K562 (cell line): ENCODE measurements at regions of chr3 and their contacts with region 1.

Region 1: GRCh38 chr3:45075821-45076625 is 49.9 kb downstream of the CLEC3B start:
- DNase-seq: no peak
- ATAC-seq: peak; percentile 39
- H3K4me3 ChIP-seq: no peak overlapping the region
- H3K27ac ChIP-seq: peak overlapping the region; percentile 33; the same call in 2 of the 3 replicates
- H3K4me1 ChIP-seq: peaks cover 17 to 51% of the 10 kb centered on the region in 2 experiments; a peak in 4 of 5 replicates
- H3K27me3 ChIP-seq: no peaks in the 10 kb centered on the region
- CTCF ChIP-seq: no peak
- EP300 ChIP-seq: no peak
- POLR2A ChIP-seq: no peak
- RAD21 ChIP-seq: no peak

Region 2: DNA sequence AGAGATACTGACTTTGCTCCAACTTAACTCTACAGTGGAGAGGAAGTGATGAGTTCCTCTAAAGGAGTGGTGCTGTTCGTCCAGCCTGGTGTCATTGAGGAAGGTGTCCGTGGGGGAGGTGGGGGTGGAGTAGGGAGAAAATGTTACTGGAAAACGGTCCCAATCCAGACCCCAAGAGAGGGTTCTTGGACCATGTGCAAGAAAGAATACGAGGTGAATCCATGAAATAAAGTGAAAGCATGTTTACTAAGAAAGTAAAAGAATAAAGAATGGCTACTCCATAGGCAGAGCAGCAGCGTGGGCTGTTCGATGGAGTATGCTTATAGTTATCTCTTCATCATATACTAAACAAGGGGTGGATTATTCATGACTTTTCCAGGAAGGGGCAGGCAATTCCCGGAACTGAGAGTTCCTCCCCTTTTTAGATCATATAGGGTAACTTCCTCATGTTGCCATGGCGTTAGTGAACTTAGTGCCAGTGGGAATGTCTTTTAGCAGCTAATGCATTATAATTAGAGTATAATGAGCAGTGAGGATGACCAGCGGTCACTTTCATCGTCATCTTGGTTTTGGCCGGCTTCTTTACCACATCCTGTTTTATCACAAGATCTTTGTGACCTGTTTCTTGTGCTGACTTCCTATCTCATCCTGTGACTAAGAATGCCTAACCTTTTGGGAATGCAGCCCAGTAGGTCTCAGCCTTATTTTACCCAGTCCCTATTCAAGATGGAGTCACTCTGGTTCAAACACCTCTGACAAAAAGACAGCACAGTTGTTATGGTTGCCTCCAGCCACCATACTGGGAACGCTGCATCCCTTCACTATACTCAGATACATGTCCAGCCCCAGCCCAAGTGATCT is 11.3 kb before region 1 on chr3:
- CTCF ChIA-PET with region 1: no interaction called
- POLR2A ChIA-PET with region 1: interaction called, 13 read pairs
- in situ Hi-C with region 1: no loop called
- intact Hi-C with region 1: no loop called
- DNase-seq: peak; percentile 58 to 99 (median 70)
- ATAC-seq: peak; percentile 73
- H3K4me3 ChIP-seq: peak overlapping the region; percentile 12; the same call in 1 of the 2 replicates
- H3K27ac ChIP-seq: peak overlapping the region; percentile 94
- H3K4me1 ChIP-seq: peaks cover 25 to 68% of the 10 kb centered on the region in 2 experiments
- H3K27me3 ChIP-seq: no peaks in the 10 kb centered on the region
- CTCF ChIP-seq: no peak
- EP300 ChIP-seq: peak; percentile 85
- POLR2A ChIP-seq: peak; percentile 92
- RAD21 ChIP-seq: peak; percentile 9 to 92; a peak in 3 of 4 replicates

Region 3: GRCh38 chr3:45309876-45310275 is 233.9 kb after region 1 on chr3:
- CTCF ChIA-PET with region 1: no interaction called
- POLR2A ChIA-PET with region 1: no interaction called
- in situ Hi-C with region 1: no loop called
- intact Hi-C with region 1: no loop called
- DNase-seq: no peak
- ATAC-seq: no peak
- H3K4me3 ChIP-seq: no peak overlapping the region
- H3K27ac ChIP-seq: no peak overlapping the region
- H3K4me1 ChIP-seq: peaks cover 0 to 2% of the 10 kb centered on the region in 2 experiments; a peak in 3 of 5 replicates
- H3K27me3 ChIP-seq: peaks cover 19 to 23% of the 10 kb centered on the region in 2 experiments
- CTCF ChIP-seq: no peak
- EP300 ChIP-seq: no peak
- POLR2A ChIP-seq: no peak
- RAD21 ChIP-seq: no peak